ENCODE measurements at regions of chr22 and their contacts with region 1.

Region 1: DNA sequence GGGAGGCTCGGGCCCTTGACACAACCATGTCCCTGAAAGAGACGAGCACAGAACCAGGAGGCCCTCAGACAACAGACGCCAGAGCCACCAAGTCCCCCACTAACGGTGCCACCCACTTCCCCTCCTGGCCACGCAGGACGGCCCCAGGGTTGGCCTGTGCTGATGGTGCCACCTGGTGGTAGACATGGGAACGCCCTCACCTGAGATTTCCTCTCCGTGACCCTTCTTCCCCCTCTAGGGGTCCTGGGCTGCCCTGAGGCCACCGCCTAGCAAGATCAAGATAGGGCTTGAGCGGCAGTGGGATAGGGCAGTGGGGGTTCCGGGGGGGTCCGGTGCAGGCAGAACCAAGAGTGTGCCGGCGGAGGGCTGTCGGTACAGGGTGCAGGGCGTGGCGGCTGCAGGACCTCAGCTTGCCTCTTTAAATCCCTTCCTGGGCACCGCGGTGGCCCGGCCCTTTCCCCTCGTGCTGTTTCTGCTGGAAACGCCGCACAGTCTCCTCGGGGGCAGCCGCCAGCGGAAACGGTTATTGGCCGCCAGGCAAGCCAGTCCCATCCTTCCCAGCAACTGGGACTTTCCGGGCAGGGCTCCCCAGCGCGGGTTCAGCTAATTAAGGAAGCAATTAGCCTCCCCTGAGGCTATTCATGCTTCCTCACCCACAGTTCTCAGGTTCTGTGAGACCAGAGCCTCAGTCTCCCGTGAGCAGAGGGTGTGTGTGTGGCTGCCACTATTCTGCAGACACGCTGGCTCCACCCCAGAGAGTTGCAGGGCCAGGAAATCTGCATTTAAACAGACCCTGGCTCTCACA is 5.5 kb upstream of the NFAM1 start:
- DNase-seq: peak; percentile 82
- H3K4me3 ChIP-seq: peak overlapping the region in 3 of 4 donors; percentile 30 to 57 (median 42)
- H3K27ac ChIP-seq: peak overlapping the region in 2 of 4 donors; percentile 55 to 57
- H3K4me1 ChIP-seq: peaks cover 0 to 32% (median 11%) of the 10 kb centered on the region in 4 donors
- H3K27me3 ChIP-seq: no peaks in the 10 kb centered on the region
- CTCF ChIP-seq: peak; percentile 98 to 99 (median 98)
- EP300 ChIP-seq: no peak
- POLR2A ChIP-seq: no peak

Region 2: DNA sequence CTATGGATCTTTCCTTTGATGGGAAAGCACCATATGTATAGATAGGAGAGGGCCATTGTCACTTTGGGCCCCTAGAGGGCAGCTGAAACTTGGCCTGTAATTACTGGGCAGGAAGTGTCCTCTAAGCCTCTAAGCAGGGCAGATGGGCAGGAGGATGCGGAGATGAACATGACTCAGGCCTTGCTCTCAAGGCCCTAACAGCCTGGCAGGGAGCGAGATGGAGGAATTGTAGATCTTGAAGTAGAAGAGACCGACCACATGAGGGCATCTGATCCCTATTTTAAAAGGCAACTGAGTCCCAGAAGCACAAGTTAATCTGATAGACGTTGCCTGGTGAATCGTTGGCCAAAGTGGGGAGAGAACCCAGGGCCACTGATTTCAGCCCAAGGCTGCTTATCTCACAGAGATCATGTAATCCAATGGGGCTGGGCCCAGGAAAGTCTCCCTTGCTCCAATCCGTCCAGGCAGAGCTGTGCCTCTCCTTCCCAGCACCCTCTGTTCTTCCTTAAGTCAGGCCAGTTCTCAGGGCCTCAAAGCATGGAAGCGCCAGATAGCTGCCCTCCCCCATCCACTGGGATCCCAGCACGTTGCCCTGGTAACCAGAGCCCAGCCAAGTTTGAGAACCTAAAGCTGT is 471.0 kb before region 1 on chr22:
- in situ Hi-C with region 1: loop called (anchors 25 kb)
- intact Hi-C with region 1: no loop called
- DNase-seq: peak; percentile 41
- H3K4me3 ChIP-seq: no peak overlapping the region
- H3K27ac ChIP-seq: no peak overlapping the region
- H3K4me1 ChIP-seq: no peaks in the 10 kb centered on the region
- H3K27me3 ChIP-seq: peaks cover 5% of the 10 kb centered on the region
- CTCF ChIP-seq: peak in 4 of 5 experiments; percentile 14 to 50 (median 36)
- EP300 ChIP-seq: no peak
- POLR2A ChIP-seq: no peak

Region 3: DNA sequence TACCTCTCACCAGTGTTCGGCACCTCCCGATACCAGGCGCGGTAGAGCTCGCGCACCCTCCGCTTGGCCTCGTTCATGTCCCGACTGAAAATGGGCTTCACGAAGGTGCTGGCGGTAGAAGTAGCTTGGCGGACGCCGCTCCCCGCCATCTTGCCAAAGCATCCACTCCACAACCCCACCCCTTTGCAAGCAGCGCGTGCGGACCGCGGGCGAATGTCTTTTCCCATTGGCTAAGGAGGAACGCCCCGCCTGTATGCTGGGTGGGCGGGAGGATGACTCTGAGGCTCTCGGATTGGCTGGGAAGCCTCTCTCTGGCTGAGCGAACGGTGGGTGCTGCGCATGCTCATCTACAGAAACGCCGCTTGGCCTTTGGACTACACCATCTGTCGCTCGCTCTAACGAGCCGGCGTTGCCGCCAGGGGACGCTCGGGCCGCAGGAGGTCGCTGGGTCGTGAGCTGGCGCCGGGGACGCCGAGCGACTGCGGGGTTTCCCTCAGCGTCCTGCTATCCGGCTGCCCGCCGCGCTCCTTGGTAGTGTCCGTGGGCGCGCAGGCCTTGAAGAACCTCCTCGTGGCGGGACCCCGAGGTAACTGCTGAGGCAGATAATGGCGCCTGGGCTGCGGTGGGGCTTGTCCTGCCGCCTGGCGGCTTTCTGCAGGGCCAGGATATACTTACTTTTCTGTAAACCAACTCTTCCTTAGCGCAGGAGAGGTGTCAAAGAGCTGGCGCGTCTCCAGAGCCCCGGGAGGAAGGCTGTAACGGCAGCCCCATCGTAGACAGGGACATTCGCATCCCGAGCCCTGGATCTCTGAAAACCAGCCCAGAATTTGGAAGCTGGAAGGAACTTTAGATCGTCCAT is 346.9 kb before region 1 on chr22 and contains the start of gene NDUFA6:
- in situ Hi-C with region 1: loop called in 1 of 4 experiments (anchors 10 kb)
- intact Hi-C with region 1: loop called (anchors 2 kb)
- DNase-seq: peak; percentile 99
- H3K4me3 ChIP-seq: peak within 1 kb of the TSS; percentile 66 to 78 (median 74)
- H3K27ac ChIP-seq: peak within 1 kb of the TSS; percentile 93 to 98 (median 96)
- H3K4me1 ChIP-seq: peaks cover 15 to 28% (median 19%) of the 10 kb centered on the region in 4 donors
- H3K27me3 ChIP-seq: no peaks in the 10 kb centered on the region
- CTCF ChIP-seq: peak; percentile 84 to 100 (median 91)
- EP300 ChIP-seq: no peak
- POLR2A ChIP-seq: peak; percentile 99
- total RNA-seq, gene NDUFA6: 17.2 to 723 (median 88.7) TPM

Region 4: DNA sequence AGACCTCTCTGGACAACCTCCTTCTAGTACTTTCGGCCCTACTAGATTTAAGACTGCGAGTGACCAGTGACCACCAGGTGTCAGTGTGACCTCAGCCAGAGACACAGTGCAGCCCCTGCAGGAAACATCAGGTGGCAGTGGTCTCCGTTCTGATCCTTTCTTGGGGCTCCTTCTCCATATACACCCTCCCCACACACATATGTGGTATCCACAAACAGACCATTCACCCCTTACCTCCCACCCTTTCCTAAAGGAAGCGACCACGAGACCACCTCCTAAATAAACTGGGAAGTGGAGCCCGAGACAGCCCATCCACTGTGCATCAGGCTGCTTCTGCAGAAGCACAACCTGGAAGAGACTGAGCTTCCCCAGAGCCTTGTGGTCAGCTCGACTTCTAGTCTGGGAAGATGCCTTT is 268.6 kb before region 1 on chr22:
- in situ Hi-C with region 1: loop called (anchors 5 to 10 kb)
- intact Hi-C with region 1: loop called (anchors 5 kb)
- DNase-seq: peak; percentile 72
- H3K4me3 ChIP-seq: no peak overlapping the region
- H3K27ac ChIP-seq: no peak overlapping the region
- H3K4me1 ChIP-seq: peaks cover 18 to 27% (median 22%) of the 10 kb centered on the region in 4 donors
- H3K27me3 ChIP-seq: no peaks in the 10 kb centered on the region
- CTCF ChIP-seq: peak; percentile 77 to 94 (median 84)
- EP300 ChIP-seq: no peak
- POLR2A ChIP-seq: no peak

Region 5: DNA sequence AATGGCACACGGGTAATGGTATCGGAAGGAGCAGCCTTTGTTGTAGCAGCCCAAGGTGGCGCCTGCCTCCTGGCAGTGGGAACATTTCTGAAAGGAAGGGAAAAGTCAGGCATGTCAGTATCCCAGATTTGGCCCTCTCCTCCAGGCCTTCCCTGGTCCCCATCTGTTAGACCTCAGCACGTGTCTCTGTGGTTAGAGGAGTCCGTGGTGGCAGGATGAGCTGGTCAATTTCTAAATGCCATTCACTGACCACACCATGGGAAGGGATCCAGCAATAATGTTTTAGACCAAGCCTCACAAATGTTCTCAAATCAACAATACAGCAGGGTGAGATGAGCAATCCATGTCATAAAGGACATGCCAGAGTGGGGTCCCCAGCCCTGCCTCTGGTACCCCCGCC is 258.1 kb before region 1 on chr22:
- in situ Hi-C with region 1: loop called in 1 of 4 experiments (anchors 10 kb)
- intact Hi-C with region 1: no loop called
- DNase-seq: no peak
- H3K4me3 ChIP-seq: no peak overlapping the region
- H3K27ac ChIP-seq: peak overlapping the region in 2 of 4 donors; percentile 7 to 44
- H3K4me1 ChIP-seq: peaks cover 0 to 45% (median 31%) of the 10 kb centered on the region in 4 donors
- H3K27me3 ChIP-seq: no peaks in the 10 kb centered on the region
- CTCF ChIP-seq: no peak
- EP300 ChIP-seq: no peak
- POLR2A ChIP-seq: no peak

Measured in transverse colon (tissue), 4 donors.